ENCODE measurements at regions of chr14 and their contacts with region 1.

Region 1: DNA sequence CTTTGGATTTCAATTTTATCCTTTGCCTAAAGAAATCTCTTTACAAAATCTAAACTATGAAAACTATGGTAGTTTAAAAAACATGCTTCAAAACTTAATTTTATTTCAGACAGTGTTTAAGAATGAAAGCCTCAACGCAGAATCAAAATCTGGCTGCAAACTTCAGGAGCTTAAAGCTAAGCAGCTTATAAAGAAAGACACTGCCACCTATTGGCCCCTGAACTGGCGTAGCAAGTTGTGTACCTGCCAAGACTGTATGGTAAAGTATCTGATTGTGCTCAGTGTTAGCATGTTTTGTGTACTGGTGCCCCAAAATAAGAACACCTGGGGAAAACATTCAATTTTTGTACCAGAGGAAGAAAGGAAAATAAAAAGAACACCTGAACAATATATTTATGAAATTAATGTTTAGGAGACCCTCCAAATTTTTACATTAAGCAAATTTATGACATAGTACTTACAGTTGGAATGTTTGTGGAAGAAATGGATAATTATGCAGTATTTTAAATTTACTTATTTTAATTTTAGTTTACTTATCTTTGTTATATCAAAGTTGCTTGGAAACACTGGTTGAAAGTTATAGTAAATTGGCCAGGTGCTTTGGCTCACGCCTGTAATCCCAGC is 12.2 kb downstream of the UBR7 start:
- DNase-seq: peak in 5 of 9 experiments; percentile 47 to 77 (median 65)
- ATAC-seq: peak; percentile 84
- H3K4me3 ChIP-seq: no peak overlapping the region
- H3K4me3 Mint-ChIP-seq: no peak overlapping the region
- H3K27ac ChIP-seq: no peak overlapping the region
- H3K27ac Mint-ChIP-seq: no peak overlapping the region
- H3K4me1 ChIP-seq: no peaks in the 10 kb centered on the region
- H3K4me1 Mint-ChIP-seq: no peaks in the 10 kb centered on the region
- H3K27me3 ChIP-seq: no peaks in the 10 kb centered on the region
- H3K27me3 Mint-ChIP-seq: no peaks in the 10 kb centered on the region
- CTCF ChIP-seq: peak; percentile 76

Region 2: GRCh38 chr14:93137864-93138263 is 81.4 kb before region 1 on chr14:
- CTCF ChIA-PET with region 1: no interaction called
- POLR2A ChIA-PET with region 1: no interaction called
- intact Hi-C with region 1: loop called in 1 of 2 experiments (anchors 1 kb)
- DNase-seq: no peak
- ATAC-seq: no peak
- H3K4me3 ChIP-seq: no peak overlapping the region
- H3K4me3 Mint-ChIP-seq: no peak overlapping the region
- H3K27ac ChIP-seq: no peak overlapping the region
- H3K27ac Mint-ChIP-seq: no peak overlapping the region
- H3K4me1 ChIP-seq: no peaks in the 10 kb centered on the region
- H3K4me1 Mint-ChIP-seq: peaks cover 2% of the 10 kb centered on the region
- H3K27me3 ChIP-seq: no peaks in the 10 kb centered on the region
- H3K27me3 Mint-ChIP-seq: no peaks in the 10 kb centered on the region
- CTCF ChIP-seq: no peak

Region 3: DNA sequence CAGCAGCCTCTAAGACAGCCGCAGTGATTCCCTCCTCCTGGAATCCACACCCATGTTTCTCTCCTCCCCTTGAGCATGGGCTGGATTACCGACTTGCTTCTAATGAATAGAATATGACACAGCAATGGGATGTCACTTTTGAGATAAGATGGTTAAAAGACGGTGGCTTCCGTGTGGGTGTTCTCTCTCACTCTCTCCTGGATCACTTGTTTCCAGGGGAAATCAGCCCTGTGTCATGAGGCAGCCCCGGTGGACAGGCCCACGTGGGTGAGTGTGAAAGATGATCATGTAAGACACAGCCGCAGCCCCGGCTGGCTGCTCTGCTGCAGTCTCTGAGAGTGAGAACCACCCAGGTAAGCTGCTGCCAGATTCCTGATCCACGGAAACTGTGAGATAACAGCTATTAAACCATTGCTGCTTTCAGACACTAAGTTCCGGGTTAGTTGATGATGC is 45.2 kb before region 1 on chr14:
- CTCF ChIA-PET with region 1: interaction called, 4 read pairs
- POLR2A ChIA-PET with region 1: interaction called, 3 read pairs
- intact Hi-C with region 1: loop called in 1 of 2 experiments (anchors 5 kb)
- DNase-seq: no peak
- ATAC-seq: no peak
- H3K4me3 ChIP-seq: no peak overlapping the region
- H3K4me3 Mint-ChIP-seq: no peak overlapping the region
- H3K27ac ChIP-seq: no peak overlapping the region
- H3K27ac Mint-ChIP-seq: no peak overlapping the region
- H3K4me1 ChIP-seq: no peaks in the 10 kb centered on the region
- H3K4me1 Mint-ChIP-seq: peaks cover 4% of the 10 kb centered on the region
- H3K27me3 ChIP-seq: no peaks in the 10 kb centered on the region
- H3K27me3 Mint-ChIP-seq: no peaks in the 10 kb centered on the region
- CTCF ChIP-seq: no peak

Region 4: DNA sequence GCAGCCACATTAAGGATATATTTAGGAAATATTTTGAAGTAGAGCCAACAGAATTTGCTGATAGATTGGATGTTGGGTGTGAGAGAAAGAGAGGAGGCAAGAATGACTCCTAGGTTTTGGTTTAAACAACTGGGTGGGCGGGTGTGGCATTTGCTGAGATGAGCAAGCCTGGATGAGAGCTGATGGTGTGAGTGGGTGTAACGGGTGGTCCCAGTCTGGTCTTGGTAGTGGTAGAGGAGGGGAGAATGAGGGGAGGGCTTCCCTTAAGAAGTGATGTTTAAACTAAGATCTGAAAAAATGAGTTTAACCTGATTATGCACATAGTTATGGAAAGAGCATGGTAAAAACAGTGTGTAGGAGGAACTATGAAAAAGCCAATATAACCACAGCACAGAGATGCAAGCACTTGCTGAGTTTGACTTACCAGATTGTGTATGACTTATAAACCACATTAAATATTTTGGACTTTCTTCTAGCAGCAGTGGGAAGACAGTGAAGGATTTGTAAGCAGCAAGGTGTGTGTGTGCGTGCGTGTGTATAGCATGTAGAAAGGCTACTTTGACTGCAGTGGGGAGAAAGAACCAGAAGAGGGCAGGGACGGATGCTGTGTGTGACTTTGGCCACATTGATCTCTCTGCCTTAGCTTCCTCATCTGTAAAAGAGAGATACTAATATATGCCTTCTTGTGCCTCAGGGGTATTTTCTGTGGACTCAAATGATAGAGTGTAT is 429.4 kb after region 1 on chr14:
- CTCF ChIA-PET with region 1: no interaction called
- POLR2A ChIA-PET with region 1: no interaction called
- intact Hi-C with region 1: no loop called
- DNase-seq: peak in 1 of 9 experiments; percentile 5
- ATAC-seq: no peak
- H3K4me3 ChIP-seq: no peak overlapping the region
- H3K4me3 Mint-ChIP-seq: no peak overlapping the region
- H3K27ac ChIP-seq: no peak overlapping the region
- H3K27ac Mint-ChIP-seq: no peak overlapping the region
- H3K4me1 ChIP-seq: no peaks in the 10 kb centered on the region
- H3K4me1 Mint-ChIP-seq: no peaks in the 10 kb centered on the region
- H3K27me3 ChIP-seq: peaks cover 0 to 3% of the 10 kb centered on the region in 2 experiments
- H3K27me3 Mint-ChIP-seq: peaks cover 14% of the 10 kb centered on the region
- CTCF ChIP-seq: no peak

Measured in CD8-positive, alpha-beta T cell (primary cell).